CD4-positive, alpha-beta memory T cell (primary cell): ENCODE measurements at regions of chr4 and their contacts with region 1.

Region 1: DNA sequence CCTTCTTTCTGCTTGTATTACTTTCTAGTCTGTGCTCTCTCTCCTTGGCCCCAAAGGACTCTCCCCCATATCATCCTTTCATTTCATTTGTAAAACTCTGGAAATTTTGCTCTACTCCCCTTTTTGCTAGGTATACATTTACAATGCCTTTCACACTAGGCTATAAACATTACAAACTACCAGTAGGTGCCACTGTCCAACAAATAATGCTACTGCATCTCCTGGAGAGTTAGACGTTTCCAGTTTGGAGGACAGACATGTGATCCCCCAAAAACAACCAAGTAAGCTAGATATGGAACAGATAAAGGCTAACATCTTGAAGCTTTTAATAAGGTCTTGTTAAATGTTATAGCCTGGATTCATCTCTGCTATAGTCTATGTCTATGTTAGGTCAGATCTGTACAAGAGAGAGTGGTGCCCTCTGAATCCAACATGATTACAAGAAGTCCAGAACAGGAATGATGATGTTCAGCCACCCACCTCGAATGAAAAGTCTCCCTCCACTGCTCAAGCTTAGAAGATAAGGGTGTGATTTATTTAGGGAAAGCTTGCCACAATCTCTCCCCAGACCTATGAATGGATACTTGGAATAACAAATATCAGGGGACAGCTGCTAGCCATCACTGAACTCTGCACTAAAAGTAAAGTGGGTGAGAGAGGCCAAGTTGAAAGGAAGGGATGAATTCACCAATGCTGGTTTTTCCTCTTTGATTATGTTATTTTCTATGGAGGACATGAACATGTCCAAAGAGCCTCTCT is 14.3 kb downstream of the CBR4 start:
- DNase-seq: no peak
- H3K4me3 ChIP-seq: no peak overlapping the region
- H3K4me3 Mint-ChIP-seq: no peak overlapping the region
- H3K27ac ChIP-seq: no peak overlapping the region
- H3K27ac Mint-ChIP-seq: peak overlapping the region in 1 of 7 donors; percentile 41
- H3K4me1 ChIP-seq: no peaks in the 10 kb centered on the region
- H3K4me1 Mint-ChIP-seq: no peaks in the 10 kb centered on the region
- H3K27me3 ChIP-seq: no peaks in the 10 kb centered on the region
- H3K27me3 Mint-ChIP-seq: no peaks in the 10 kb centered on the region

Region 2: GRCh38 chr4:169492438-169493163 is 496.9 kb after region 1 on chr4:
- CTCF ChIA-PET with region 1: interaction called, 10 read pairs
- POLR2A ChIA-PET with region 1: no interaction called
- intact Hi-C with region 1: loop called (anchors 5 kb)
- DNase-seq: peak in 4 of 5 donors; percentile 18 to 28 (median 24)
- H3K4me3 ChIP-seq: no peak overlapping the region
- H3K4me3 Mint-ChIP-seq: peak overlapping the region in 1 of 8 donors; percentile 0
- H3K27ac ChIP-seq: no peak overlapping the region
- H3K27ac Mint-ChIP-seq: peak overlapping the region in 2 of 7 donors; percentile 5 to 43
- H3K4me1 ChIP-seq: no peaks in the 10 kb centered on the region
- H3K4me1 Mint-ChIP-seq: peaks cover 0 to 16% (median 5%) of the 10 kb centered on the region in 4 donors
- H3K27me3 ChIP-seq: no peaks in the 10 kb centered on the region
- H3K27me3 Mint-ChIP-seq: no peaks in the 10 kb centered on the region

Region 3: GRCh38 chr4:169802873-169803272 is 807.2 kb after region 1 on chr4:
- CTCF ChIA-PET with region 1: no interaction called
- POLR2A ChIA-PET with region 1: no interaction called
- intact Hi-C with region 1: no loop called
- DNase-seq: no peak
- H3K4me3 ChIP-seq: no peak overlapping the region
- H3K4me3 Mint-ChIP-seq: no peak overlapping the region
- H3K27ac ChIP-seq: no peak overlapping the region
- H3K27ac Mint-ChIP-seq: no peak overlapping the region
- H3K4me1 ChIP-seq: no peaks in the 10 kb centered on the region
- H3K4me1 Mint-ChIP-seq: no peaks in the 10 kb centered on the region
- H3K27me3 ChIP-seq: no peaks in the 10 kb centered on the region
- H3K27me3 Mint-ChIP-seq: peaks cover 0 to 18% of the 10 kb centered on the region in 2 donors